ENCODE measurements at regions of chr1 and their contacts with region 1.

Region 1: DNA sequence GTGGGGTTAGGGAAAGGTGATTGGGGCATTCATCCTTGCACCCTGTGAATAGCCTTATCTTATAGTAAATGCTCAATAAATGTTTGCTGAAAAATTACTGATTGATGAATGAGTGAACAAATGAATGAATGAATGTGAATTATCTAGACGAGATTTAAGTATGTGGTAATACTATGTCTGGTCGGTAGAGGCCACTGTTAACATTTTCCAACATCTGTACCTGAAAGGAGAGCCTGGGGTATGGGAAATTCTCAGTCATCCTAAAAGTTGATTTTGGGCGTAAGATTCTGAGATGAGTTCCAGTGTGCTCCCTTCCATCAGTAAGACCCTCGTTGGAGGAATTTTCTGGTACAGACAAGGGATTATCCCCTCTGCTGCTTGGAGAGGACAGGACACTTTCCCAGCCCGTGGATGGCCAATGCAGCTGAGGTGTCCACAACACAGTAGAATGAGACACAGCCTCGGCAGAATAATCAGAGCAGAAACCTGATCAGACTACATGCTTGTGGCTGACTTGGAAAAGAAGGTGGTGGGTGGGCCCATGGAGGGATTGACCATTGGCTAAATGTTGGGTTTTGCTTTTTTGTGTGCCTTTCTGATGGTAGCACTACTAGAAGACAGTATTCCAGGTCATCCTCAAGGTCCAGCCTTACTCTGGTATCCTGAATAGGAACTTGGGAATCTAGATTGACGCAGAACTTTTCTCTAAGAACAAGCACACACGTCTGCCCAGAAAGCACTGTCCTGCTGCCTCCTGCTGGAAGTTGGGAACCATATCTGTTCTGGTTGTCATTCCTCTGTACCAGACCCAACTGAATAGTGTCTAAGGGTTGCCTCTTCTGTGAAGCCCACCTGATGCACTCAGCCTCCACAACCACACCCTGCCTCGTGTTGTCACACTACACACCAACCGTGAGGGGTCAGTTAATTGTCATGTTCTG is 262.0 kb downstream of the TNR start:
- DNase-seq: peak; percentile 51
- ATAC-seq: no peak
- H3K4me3 ChIP-seq: no peak overlapping the region
- H3K4me3 Mint-ChIP-seq: no peak overlapping the region
- H3K27ac ChIP-seq: no peak overlapping the region
- H3K27ac Mint-ChIP-seq: no peak overlapping the region
- H3K4me1 ChIP-seq: no peaks in the 10 kb centered on the region
- H3K4me1 Mint-ChIP-seq: peaks cover 2% of the 10 kb centered on the region
- H3K27me3 ChIP-seq: peaks cover 0 to 3% (median 2%) of the 10 kb centered on the region in 4 experiments
- H3K27me3 Mint-ChIP-seq: peaks cover 10% of the 10 kb centered on the region
- CTCF ChIP-seq: peak; percentile 76

Region 2: GRCh38 chr1:175563236-175563895 is 82.0 kb after region 1 on chr1:
- CTCF ChIA-PET with region 1: no interaction called
- POLR2A ChIA-PET with region 1: no interaction called
- intact Hi-C with region 1: no loop called
- DNase-seq: no peak
- ATAC-seq: no peak
- H3K4me3 ChIP-seq: no peak overlapping the region
- H3K4me3 Mint-ChIP-seq: no peak overlapping the region
- H3K27ac ChIP-seq: no peak overlapping the region
- H3K27ac Mint-ChIP-seq: no peak overlapping the region
- H3K4me1 ChIP-seq: no peaks in the 10 kb centered on the region
- H3K4me1 Mint-ChIP-seq: no peaks in the 10 kb centered on the region
- H3K27me3 ChIP-seq: no peaks in the 10 kb centered on the region
- H3K27me3 Mint-ChIP-seq: peaks cover 4% of the 10 kb centered on the region
- CTCF ChIP-seq: no peak

Region 3: DNA sequence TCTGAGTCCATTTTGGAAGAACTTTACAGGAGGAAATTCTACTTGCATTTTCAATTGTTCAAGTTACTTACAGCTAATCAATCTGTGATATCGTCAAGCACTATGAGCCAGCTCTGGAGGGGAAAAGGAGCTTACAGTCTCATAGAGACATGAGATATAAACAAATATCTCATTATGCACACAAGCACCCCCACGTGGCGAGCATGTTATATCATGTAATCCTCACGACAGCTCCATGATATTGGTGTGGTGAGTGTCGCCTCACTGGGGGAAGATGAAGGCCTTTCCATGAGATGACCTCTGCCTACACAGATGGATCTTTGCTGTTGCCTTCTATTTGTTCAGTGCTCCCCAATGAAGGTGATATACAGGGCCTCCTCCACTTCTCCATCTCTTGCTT is 227.4 kb after region 1 on chr1:
- CTCF ChIA-PET with region 1: interaction called, 8 read pairs
- POLR2A ChIA-PET with region 1: no interaction called
- intact Hi-C with region 1: loop called (anchors 1 kb)
- DNase-seq: peak; percentile 23
- ATAC-seq: no peak
- H3K4me3 ChIP-seq: no peak overlapping the region
- H3K4me3 Mint-ChIP-seq: no peak overlapping the region
- H3K27ac ChIP-seq: no peak overlapping the region
- H3K27ac Mint-ChIP-seq: no peak overlapping the region
- H3K4me1 ChIP-seq: no peaks in the 10 kb centered on the region
- H3K4me1 Mint-ChIP-seq: no peaks in the 10 kb centered on the region
- H3K27me3 ChIP-seq: no peaks in the 10 kb centered on the region
- H3K27me3 Mint-ChIP-seq: no peaks in the 10 kb centered on the region
- CTCF ChIP-seq: no peak

Measured in B cell (primary cell).